Activated naive CD4-positive, alpha-beta T cell treated with anti-CD3 and anti-CD28 coated beads for 36 hours (primary cell): ENCODE measurements at regions of chr6 and their contacts with region 1.

Region 1: GRCh38 chr6:150169609-150170008 is 26.8 kb downstream of the PPP1R14C start:
- DNase-seq: peak; percentile 71
- H3K4me3 Mint-ChIP-seq: no peak overlapping the region
- H3K27ac Mint-ChIP-seq: no peak overlapping the region
- H3K4me1 Mint-ChIP-seq: peaks cover 16% of the 10 kb centered on the region
- H3K27me3 Mint-ChIP-seq: peaks cover 37% of the 10 kb centered on the region

Region 2: DNA sequence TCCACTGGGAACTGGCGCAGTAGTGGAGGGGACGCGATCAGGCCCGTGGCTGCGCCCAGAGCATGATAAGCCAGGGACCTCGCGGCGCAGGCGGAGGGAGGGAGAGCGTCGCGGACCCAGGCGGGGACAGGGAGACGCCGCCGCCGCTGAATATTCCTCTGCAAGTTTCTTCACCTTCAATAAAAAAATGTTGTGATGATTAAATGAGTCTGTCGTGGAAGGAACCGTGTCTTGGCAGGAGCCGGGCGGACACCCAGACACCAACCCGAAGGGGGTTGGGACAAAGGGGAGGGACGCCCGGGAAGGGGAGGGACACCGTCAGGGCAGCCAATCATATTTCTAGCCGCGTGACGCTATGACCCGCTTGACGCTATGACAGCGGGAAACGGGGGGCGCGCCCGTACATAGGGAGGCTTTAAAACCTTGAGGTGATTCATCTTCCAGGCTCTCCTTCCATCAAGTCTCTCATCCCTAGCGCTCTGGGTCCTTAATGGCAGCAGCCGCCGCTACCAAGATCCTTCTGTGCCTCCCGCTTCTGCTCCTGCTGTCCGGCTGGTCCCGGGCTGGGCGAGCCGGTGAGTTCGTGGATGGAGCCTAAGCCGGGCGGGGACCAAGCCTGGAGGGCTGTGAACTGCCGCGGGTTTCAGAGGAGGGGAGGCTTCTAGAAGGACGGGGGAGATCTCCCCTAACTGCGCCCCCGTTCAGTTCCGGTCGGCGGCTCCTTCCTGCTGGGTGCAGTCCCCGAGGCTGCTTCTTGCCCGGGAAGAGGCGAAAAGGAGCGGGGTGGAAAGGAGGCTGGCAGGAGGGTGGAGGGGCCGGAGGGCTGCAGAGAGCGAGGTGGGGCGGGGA is 227.8 kb before region 1 on chr6 and contains the start of gene ULBP2:
- CTCF ChIA-PET with region 1: no interaction called
- intact Hi-C with region 1: loop called (anchors 1 kb)
- DNase-seq: peak; percentile 96
- H3K4me3 Mint-ChIP-seq: peak within 1 kb of the TSS; percentile 89
- H3K27ac Mint-ChIP-seq: no peak within 1 kb of the TSS
- H3K4me1 Mint-ChIP-seq: peaks cover 32% of the 10 kb centered on the region
- H3K27me3 Mint-ChIP-seq: peaks cover 46% of the 10 kb centered on the region
- total RNA-seq, gene ULBP2: 0.69 to 1.4 TPM

Region 3: DNA sequence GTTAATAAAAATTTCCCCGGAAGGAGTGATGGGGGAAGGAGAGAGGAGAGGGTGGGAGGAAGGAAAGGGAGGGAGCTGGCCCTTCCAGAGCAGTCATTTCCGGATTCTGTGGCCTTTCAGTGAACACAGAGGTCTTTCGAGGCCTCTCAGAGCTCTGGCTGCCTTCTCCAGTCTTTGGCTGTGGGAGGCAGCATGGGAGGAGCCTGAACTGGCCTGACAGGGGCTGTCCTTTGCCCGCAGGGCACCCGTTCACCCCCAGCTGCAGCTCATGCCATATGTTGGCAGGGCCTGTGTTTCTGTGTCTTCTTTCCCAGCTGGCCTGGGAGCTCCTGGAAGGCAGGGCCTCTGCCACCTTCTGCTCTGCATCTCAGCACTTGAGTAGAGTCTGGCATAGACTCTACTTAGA is 68.7 kb after region 1 on chr6:
- CTCF ChIA-PET with region 1: no interaction called
- intact Hi-C with region 1: loop called (anchors 1 kb)
- DNase-seq: no peak
- H3K4me3 Mint-ChIP-seq: no peak overlapping the region
- H3K27ac Mint-ChIP-seq: no peak overlapping the region
- H3K4me1 Mint-ChIP-seq: peaks cover 9% of the 10 kb centered on the region
- H3K27me3 Mint-ChIP-seq: peaks cover 35% of the 10 kb centered on the region

Region 4: GRCh38 chr6:150263765-150264404 is 94.3 kb after region 1 on chr6:
- CTCF ChIA-PET with region 1: no interaction called
- intact Hi-C with region 1: loop called (anchors 1 kb)
- DNase-seq: peak; percentile 65
- H3K4me3 Mint-ChIP-seq: no peak overlapping the region
- H3K27ac Mint-ChIP-seq: no peak overlapping the region
- H3K4me1 Mint-ChIP-seq: no peaks in the 10 kb centered on the region
- H3K27me3 Mint-ChIP-seq: no peaks in the 10 kb centered on the region

Region 5: GRCh38 chr6:151285122-151285521 is 1115.5 kb after region 1 on chr6:
- CTCF ChIA-PET with region 1: no interaction called
- intact Hi-C with region 1: loop called (anchors 1 kb)
- DNase-seq: no peak
- H3K4me3 Mint-ChIP-seq: no peak overlapping the region
- H3K27ac Mint-ChIP-seq: peak overlapping the region; percentile 3
- H3K4me1 Mint-ChIP-seq: peaks cover 33% of the 10 kb centered on the region
- H3K27me3 Mint-ChIP-seq: peaks cover 5% of the 10 kb centered on the region